ENCODE measurements at regions of chr13 and their contacts with region 1.

Region 1: GRCh38 chr13:32538621-32539246 is at the start of gene N4BP2L2:
- DNase-seq: peak; percentile 91 to 98 (median 94)
- H3K4me3 ChIP-seq: peak within 1 kb of the TSS; percentile 65 to 98 (median 90)
- H3K27ac ChIP-seq: peak within 1 kb of the TSS; percentile 51 to 97 (median 90)
- H3K27me3 ChIP-seq: no peaks in the 10 kb centered on the region
- CTCF ChIP-seq: peak; percentile 41 to 86 (median 70)
- total RNA-seq, gene N4BP2L2: 137 to 249 (median 191) TPM

Region 2: DNA sequence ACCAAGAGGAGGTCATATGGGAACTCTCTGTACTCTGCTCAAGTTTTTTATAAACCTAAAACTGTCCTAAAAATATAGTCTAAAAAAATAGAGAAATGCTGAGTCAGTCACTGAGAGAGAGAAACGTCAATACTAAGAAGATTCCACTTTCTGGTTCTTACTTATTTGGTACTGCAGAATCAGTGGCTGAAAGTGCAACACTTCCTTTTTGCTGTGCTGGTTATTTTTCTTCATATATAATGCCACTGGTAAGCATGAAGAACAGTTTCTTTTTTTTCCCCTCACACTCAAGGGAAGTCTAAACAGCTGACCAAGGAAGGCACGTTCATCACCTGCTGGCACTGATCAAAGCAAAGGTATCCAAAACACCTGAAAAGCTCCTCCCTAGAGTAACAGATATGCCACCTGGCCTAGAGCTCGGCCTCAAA is 66.5 kb before region 1 on chr13:
- intact Hi-C with region 1: loop called in 1 of 2 experiments (anchors 10 kb)
- DNase-seq: no peak
- H3K4me3 ChIP-seq: peak overlapping the region in 1 of 59 donors; percentile 22
- H3K27ac ChIP-seq: peak overlapping the region in 58 of 59 donors; percentile 18 to 93 (median 83)
- H3K27me3 ChIP-seq: no peaks in the 10 kb centered on the region
- CTCF ChIP-seq: no peak

Measured in dorsolateral prefrontal cortex (tissue), 120 donors.